ENCODE measurements at regions of chr4 and their contacts with region 1.

Region 1: DNA sequence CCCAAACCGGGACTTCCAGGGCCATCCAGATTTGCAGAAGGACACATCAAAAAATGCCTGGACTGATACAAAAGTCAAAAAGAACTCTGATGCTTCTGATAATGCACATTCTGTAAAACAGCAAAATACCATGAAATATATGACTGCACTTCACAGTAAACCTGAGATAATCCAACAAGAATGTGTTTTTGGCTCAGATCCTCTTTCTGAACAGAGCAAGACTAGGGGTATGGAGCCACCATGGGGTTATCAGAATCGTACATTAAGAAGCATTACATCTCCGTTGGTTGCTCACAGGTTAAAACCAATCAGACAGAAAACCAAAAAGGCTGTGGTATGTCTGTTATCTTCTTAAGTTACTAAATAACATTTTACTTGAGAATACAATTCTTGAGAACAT is 9.2 kb downstream of the PLK4 start:
- DNase-seq: no peak
- H3K4me3 ChIP-seq: no peak overlapping the region
- H3K27me3 ChIP-seq: no peaks in the 10 kb centered on the region
- CTCF ChIP-seq: no peak

Region 2: GRCh38 chr4:127558489-127559407 is 331.2 kb before region 1 on chr4:
- CTCF ChIA-PET with region 1: no interaction called
- POLR2A ChIA-PET with region 1: no interaction called
- DNase-seq: no peak
- H3K4me3 ChIP-seq: no peak overlapping the region
- H3K27me3 ChIP-seq: no peaks in the 10 kb centered on the region
- CTCF ChIP-seq: no peak

Region 3: GRCh38 chr4:127822430-127822829 is 67.5 kb before region 1 on chr4:
- CTCF ChIA-PET with region 1: no interaction called
- POLR2A ChIA-PET with region 1: no interaction called
- DNase-seq: no peak
- H3K4me3 ChIP-seq: no peak overlapping the region
- H3K27me3 ChIP-seq: no peaks in the 10 kb centered on the region
- CTCF ChIP-seq: no peak

Region 4: GRCh38 chr4:127905029-127905428 is 15.1 kb after region 1 on chr4:
- CTCF ChIA-PET with region 1: no interaction called
- POLR2A ChIA-PET with region 1: no interaction called
- DNase-seq: no peak
- H3K4me3 ChIP-seq: no peak overlapping the region
- H3K27me3 ChIP-seq: no peaks in the 10 kb centered on the region
- CTCF ChIP-seq: no peak

Region 5: GRCh38 chr4:128565565-128566186 is 675.8 kb after region 1 on chr4:
- CTCF ChIA-PET with region 1: no interaction called
- POLR2A ChIA-PET with region 1: interaction called, 11 read pairs
- DNase-seq: no peak
- H3K4me3 ChIP-seq: no peak overlapping the region
- H3K27me3 ChIP-seq: no peaks in the 10 kb centered on the region
- CTCF ChIP-seq: peak; percentile 54

Measured in BJ (cell line).